ENCODE measurements at regions of chr4 and their contacts with region 1.

Region 1: DNA sequence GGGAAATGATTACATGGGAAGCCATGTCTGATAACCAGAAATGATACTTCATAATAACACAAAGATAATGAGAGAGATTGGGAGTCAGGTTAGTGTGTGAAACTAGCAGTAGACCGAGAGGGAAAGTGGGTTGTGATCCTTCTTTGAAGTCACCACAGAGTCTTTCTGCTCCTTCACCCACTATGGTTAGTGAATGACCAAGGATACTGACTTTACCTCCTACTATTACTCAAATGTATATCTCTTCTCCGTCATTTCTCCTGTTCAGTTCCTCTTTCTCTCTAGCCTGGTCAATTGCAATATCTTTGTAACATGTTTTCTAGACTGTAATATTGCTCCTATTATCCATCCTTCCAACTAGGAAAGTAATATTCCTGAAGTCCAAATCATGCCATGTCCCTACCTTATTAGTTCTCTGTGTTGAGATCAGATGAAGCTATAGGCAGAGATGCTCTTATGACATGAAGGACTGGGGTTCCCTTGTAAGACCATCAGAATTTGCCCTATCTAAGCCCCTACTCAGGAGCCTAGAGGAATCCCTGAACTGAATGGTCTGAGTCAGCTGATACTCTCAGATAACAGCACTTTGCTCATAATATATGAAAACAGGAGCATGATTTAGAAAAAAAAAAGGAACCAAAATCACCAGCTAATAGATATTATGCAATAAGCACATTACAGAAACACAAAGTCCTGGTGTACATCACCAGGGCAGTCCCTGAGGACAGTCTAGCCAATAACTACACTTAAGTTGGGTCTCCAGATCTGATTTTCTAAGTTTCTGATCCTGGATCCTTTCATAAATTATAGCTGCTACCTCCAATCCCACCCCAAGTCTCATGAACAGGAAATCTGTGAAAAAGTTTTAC is 81.2 kb downstream of the SHROOM3 start:
- DNase-seq: no peak
- H3K4me3 ChIP-seq: no peak overlapping the region
- H3K27ac ChIP-seq: no peak overlapping the region
- H3K4me1 ChIP-seq: no peaks in the 10 kb centered on the region
- H3K27me3 ChIP-seq: no peaks in the 10 kb centered on the region
- CTCF ChIP-seq: no peak
- EP300 ChIP-seq: no peak
- POLR2A ChIP-seq: no peak

Region 2: DNA sequence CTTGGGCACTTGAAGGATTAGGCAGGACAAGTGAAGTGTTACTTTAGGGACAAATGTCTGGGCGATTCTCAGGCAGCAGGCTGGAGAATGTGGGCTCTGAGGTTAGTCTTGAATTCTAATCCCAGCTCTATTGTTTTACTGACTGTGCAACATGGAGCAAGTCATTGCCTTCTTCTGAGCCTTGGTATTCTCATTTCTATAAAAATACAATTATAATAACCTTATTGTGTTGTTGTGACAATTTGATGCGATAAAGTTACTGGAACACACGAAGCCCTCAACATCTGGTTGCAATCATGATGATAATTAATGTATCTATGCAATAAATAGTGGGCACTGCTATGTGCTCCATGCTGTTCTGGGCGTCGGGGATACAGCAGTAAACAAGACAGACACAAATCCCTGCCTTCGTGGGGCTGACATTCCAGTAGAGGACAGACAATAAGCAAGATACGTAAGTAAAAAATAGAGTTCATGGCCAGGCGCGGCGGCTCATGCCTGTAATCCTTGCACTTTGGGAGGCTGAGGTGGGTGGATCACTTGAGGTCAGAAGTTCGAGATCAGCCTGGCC is 31.0 kb after region 1 on chr4:
- intact Hi-C with region 1: no loop called
- DNase-seq: no peak
- H3K4me3 ChIP-seq: no peak overlapping the region
- H3K27ac ChIP-seq: no peak overlapping the region
- H3K4me1 ChIP-seq: no peaks in the 10 kb centered on the region
- H3K27me3 ChIP-seq: no peaks in the 10 kb centered on the region
- CTCF ChIP-seq: no peak
- EP300 ChIP-seq: no peak
- POLR2A ChIP-seq: no peak

Region 3: GRCh38 chr4:76607266-76607799 is 91.1 kb after region 1 on chr4:
- intact Hi-C with region 1: loop called in 2 of 4 experiments (anchors 5 to 10 kb)
- DNase-seq: no peak
- H3K4me3 ChIP-seq: no peak overlapping the region
- H3K27ac ChIP-seq: no peak overlapping the region
- H3K4me1 ChIP-seq: peaks cover 12% of the 10 kb centered on the region
- H3K27me3 ChIP-seq: no peaks in the 10 kb centered on the region
- CTCF ChIP-seq: no peak
- EP300 ChIP-seq: no peak
- POLR2A ChIP-seq: no peak

Region 4: DNA sequence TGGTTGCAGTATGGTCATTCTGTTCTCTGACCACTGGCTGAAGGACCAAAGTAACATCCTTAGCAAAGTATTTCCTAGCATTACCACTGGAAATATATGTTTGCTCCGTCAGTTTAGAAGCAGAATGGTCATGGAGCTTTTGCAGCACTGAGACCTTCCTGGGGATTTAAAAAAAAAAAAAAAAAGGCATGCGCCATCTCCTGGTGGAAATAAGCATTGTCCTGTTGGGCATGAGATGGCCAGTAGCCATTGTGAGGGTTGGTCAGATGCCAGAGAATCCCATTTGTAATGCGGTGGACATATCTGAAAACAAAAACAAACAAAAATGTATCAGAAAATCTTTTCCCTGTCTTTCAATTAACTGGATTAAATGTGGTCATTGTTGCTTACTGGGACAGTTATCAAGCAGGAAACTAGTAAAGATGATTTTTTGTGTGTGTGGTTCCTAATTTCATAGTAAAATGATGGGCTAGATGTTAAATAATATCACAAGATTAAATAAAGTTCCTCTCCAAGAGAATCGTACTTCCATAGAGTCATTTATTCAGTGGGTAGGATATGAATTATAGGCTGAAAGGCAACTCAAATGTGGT is 242.2 kb after region 1 on chr4:
- intact Hi-C with region 1: loop called (anchors 5 to 10 kb)
- DNase-seq: peak in 2 of 5 donors; percentile 42 to 43
- H3K4me3 ChIP-seq: no peak overlapping the region
- H3K27ac ChIP-seq: no peak overlapping the region
- H3K4me1 ChIP-seq: peaks cover 4% of the 10 kb centered on the region
- H3K27me3 ChIP-seq: no peaks in the 10 kb centered on the region
- CTCF ChIP-seq: peak; percentile 22 to 55 (median 39)
- EP300 ChIP-seq: no peak
- POLR2A ChIP-seq: no peak

Region 5: GRCh38 chr4:77036206-77036605 is 520.0 kb after region 1 on chr4:
- intact Hi-C with region 1: loop called in 1 of 4 experiments (anchors 10 kb)
- DNase-seq: no peak
- H3K4me3 ChIP-seq: no peak overlapping the region
- H3K27ac ChIP-seq: no peak overlapping the region
- H3K4me1 ChIP-seq: no peaks in the 10 kb centered on the region
- H3K27me3 ChIP-seq: no peaks in the 10 kb centered on the region
- CTCF ChIP-seq: no peak
- EP300 ChIP-seq: no peak
- POLR2A ChIP-seq: no peak

Region 6: GRCh38 chr4:77203380-77204197 is 687.4 kb after region 1 on chr4:
- intact Hi-C with region 1: loop called in 3 of 4 experiments (anchors 5 to 10 kb)
- DNase-seq: peak; percentile 46 to 66 (median 48)
- H3K4me3 ChIP-seq: no peak overlapping the region
- H3K27ac ChIP-seq: no peak overlapping the region
- H3K4me1 ChIP-seq: no peaks in the 10 kb centered on the region
- H3K27me3 ChIP-seq: no peaks in the 10 kb centered on the region
- CTCF ChIP-seq: peak; percentile 28 to 69 (median 57)
- EP300 ChIP-seq: no peak
- POLR2A ChIP-seq: no peak

Measured in ovary (tissue), 10 donors.